Gastrocnemius medialis (tissue), 4 donors: ENCODE measurements at regions of chr1 and their contacts with region 1.

Region 1: GRCh38 chr1:10045480-10046355 is 13.0 kb downstream of the UBE4B start:
- DNase-seq: peak; percentile 48 to 62
- ATAC-seq: peak; percentile 74 to 85
- H3K4me3 ChIP-seq: peak overlapping the region in 2 of 4 donors; percentile 22 to 34
- H3K27ac ChIP-seq: peak overlapping the region; percentile 68 to 89 (median 81)
- H3K4me1 ChIP-seq: peaks cover 27 to 53% of the 10 kb centered on the region in 2 donors
- H3K27me3 ChIP-seq: no peaks in the 10 kb centered on the region
- CTCF ChIP-seq: no peak
- POLR2A ChIP-seq: no peak

Region 2: DNA sequence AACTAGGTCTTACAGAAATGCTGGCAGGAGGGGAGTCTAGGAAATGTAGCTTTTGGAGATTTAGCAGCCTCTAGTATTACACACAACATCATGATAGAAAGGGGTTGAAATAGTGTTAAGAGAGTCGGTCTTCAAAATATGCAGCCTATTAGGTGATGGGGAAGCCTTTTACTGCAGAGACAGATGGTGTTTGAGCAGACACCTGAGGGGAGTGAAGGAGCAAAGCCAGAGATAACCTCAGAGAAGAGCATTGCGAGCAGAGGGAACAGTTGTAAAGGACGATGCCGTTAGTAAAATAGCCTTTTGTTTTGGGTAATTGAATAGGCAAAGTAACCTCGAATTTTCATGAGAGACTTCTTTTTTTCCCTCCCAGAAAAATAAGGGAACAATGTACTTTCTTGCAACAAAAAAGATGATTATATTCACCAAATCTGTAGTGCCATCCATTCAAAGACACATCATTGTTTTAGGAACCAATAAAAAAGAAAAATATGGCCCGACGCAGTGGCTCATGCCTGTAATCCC is 98.3 kb after region 1 on chr1:
- in situ Hi-C with region 1: no loop called
- intact Hi-C with region 1: loop called (anchors 5 kb)
- DNase-seq: no peak
- ATAC-seq: no peak
- H3K4me3 ChIP-seq: no peak overlapping the region
- H3K27ac ChIP-seq: no peak overlapping the region
- H3K4me1 ChIP-seq: peaks cover 0 to 4% of the 10 kb centered on the region in 2 donors
- H3K27me3 ChIP-seq: no peaks in the 10 kb centered on the region
- CTCF ChIP-seq: no peak
- POLR2A ChIP-seq: no peak

Region 3: GRCh38 chr1:10155087-10155712 is 109.5 kb after region 1 on chr1:
- in situ Hi-C with region 1: no loop called
- intact Hi-C with region 1: no loop called
- DNase-seq: peak; percentile 7 to 36
- ATAC-seq: peak; percentile 83 to 88
- H3K4me3 ChIP-seq: no peak overlapping the region
- H3K27ac ChIP-seq: peak overlapping the region; percentile 77 to 90 (median 86)
- H3K4me1 ChIP-seq: peaks cover 18 to 38% of the 10 kb centered on the region in 2 donors
- H3K27me3 ChIP-seq: no peaks in the 10 kb centered on the region
- CTCF ChIP-seq: no peak
- POLR2A ChIP-seq: no peak

Region 4: GRCh38 chr1:10195570-10195969 is 149.9 kb after region 1 on chr1:
- in situ Hi-C with region 1: no loop called
- intact Hi-C with region 1: no loop called
- DNase-seq: no peak
- ATAC-seq: no peak
- H3K4me3 ChIP-seq: no peak overlapping the region
- H3K27ac ChIP-seq: no peak overlapping the region
- H3K4me1 ChIP-seq: no peaks in the 10 kb centered on the region
- H3K27me3 ChIP-seq: no peaks in the 10 kb centered on the region
- CTCF ChIP-seq: no peak
- POLR2A ChIP-seq: no peak